Activated naive CD4-positive, alpha-beta T cell treated with anti-CD3 and anti-CD28 coated beads for 36 hours (primary cell): ENCODE measurements at regions of chr2 and their contacts with region 1.

Region 1: GRCh38 chr2:202717598-202718310 is 83.0 kb downstream of the FAM117B start:
- DNase-seq: peak; percentile 45
- H3K4me3 Mint-ChIP-seq: no peak overlapping the region
- H3K27ac Mint-ChIP-seq: peak overlapping the region; percentile 36
- H3K4me1 Mint-ChIP-seq: peaks cover 57% of the 10 kb centered on the region
- H3K27me3 Mint-ChIP-seq: no peaks in the 10 kb centered on the region

Region 2: DNA sequence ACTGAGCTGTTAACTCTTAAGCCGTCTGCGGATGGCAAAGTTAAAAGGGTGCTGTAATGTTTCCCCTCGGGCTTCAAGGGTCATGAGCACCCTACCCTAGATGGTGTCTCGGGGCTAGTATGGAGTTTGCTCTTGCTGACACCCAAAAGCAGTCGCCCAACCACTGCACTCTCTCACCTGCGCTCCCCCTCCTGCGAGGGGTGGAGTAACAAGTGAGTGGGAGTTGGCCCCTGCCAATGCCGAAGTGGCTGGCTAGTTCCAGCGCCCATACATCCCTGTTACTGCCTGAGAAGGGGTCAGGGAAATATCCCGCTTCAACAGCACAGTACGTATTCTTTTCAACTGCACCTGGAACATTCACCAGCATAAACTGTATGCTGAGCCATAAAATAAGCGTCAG is 35.5 kb before region 1 on chr2:
- CTCF ChIA-PET with region 1: no interaction called
- intact Hi-C with region 1: no loop called
- DNase-seq: no peak
- H3K4me3 Mint-ChIP-seq: no peak overlapping the region
- H3K27ac Mint-ChIP-seq: no peak overlapping the region
- H3K4me1 Mint-ChIP-seq: peaks cover 35% of the 10 kb centered on the region
- H3K27me3 Mint-ChIP-seq: no peaks in the 10 kb centered on the region

Region 3: DNA sequence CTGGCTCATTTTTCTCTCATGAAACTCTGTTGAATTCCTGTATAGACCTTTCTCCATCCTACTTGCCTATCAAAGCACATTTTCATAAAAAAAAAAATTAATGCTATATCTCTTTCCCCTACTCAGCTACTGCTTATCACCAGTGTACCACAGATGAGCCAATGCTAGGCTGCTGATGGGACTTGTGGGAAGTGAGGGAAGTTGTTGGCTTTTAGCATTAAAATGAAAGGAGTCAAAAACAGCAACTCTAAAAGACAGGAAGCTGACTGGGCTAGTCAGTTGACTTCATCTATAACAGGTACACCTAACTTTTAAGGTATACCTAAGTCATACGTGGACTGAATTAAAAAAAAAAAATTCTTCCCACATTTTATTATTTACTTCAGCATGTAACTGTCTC is 19.1 kb after region 1 on chr2:
- CTCF ChIA-PET with region 1: interaction called, 3 read pairs
- intact Hi-C with region 1: loop called (anchors 2 kb)
- DNase-seq: peak; percentile 23
- H3K4me3 Mint-ChIP-seq: no peak overlapping the region
- H3K27ac Mint-ChIP-seq: no peak overlapping the region
- H3K4me1 Mint-ChIP-seq: peaks cover 30% of the 10 kb centered on the region
- H3K27me3 Mint-ChIP-seq: no peaks in the 10 kb centered on the region

Region 4: GRCh38 chr2:202771741-202772460 is 54.1 kb after region 1 on chr2:
- CTCF ChIA-PET with region 1: no interaction called
- intact Hi-C with region 1: no loop called
- DNase-seq: no peak
- H3K4me3 Mint-ChIP-seq: no peak overlapping the region
- H3K27ac Mint-ChIP-seq: no peak overlapping the region
- H3K4me1 Mint-ChIP-seq: peaks cover 10% of the 10 kb centered on the region
- H3K27me3 Mint-ChIP-seq: no peaks in the 10 kb centered on the region

Region 5: DNA sequence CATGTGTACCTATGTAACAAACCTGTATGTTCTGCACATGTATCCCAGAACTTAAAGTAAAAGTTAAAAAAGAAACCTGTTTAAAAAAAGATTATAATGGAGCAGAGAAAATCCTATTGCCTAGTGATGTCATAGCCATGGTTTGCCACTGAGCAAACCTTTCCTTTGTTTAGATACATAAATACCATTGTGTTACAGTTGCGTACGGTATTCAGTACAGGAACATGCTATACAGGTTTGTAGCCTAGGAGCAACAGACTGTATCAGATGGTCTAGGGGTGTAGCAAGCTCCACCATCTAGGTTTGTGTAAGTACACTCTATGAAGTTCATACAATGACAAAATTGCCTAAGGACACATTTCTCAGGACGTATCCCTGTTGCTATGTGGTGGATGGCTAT is 140.8 kb after region 1 on chr2:
- CTCF ChIA-PET with region 1: no interaction called
- intact Hi-C with region 1: no loop called
- DNase-seq: no peak
- H3K4me3 Mint-ChIP-seq: no peak overlapping the region
- H3K27ac Mint-ChIP-seq: no peak overlapping the region
- H3K4me1 Mint-ChIP-seq: no peaks in the 10 kb centered on the region
- H3K27me3 Mint-ChIP-seq: no peaks in the 10 kb centered on the region

Region 6: GRCh38 chr2:204449977-204450376 is 1732.2 kb after region 1 on chr2:
- CTCF ChIA-PET with region 1: no interaction called
- intact Hi-C with region 1: no loop called
- DNase-seq: no peak
- H3K4me3 Mint-ChIP-seq: no peak overlapping the region
- H3K27ac Mint-ChIP-seq: no peak overlapping the region
- H3K4me1 Mint-ChIP-seq: no peaks in the 10 kb centered on the region
- H3K27me3 Mint-ChIP-seq: peaks cover 13% of the 10 kb centered on the region